ENCODE measurements at regions of chr2 and their contacts with region 1.

Region 1: DNA sequence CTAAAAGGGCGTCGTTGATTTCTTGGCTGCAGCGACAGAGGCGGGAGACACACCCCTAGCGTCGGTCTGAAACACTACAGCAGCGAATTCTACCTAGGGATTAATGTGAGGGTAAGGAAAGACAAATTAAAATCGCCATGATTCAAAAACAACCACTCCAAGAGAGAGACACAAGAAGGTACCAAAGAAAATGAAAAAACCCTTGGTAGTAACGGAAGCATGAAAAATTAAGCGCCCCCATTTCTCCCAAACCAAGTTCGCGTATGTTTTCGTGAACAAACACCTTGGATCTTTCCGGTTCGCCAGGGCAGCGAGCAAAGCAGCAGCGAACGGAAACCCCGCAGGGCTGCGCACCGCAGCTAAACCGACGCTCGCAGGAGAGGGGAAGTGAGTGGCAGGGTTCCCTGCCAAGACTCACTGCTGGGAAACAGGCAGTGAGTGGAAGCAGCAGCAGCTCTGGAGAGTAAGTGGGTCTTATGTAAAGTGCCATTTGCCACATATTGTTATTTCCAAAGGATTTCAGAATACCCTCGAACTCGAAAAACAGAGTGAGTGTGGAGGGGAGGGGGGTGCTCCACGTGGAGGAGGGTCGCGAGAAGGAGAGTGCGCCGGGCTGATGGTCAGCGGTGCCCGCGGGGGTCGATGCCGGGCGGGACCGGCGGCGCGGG is 1.0 kb downstream of the PPP3R1 start:
- DNase-seq: peak; percentile 75 to 81
- ATAC-seq: peak; percentile 70
- H3K4me3 ChIP-seq: peak overlapping the region; percentile 96 to 100
- H3K27ac ChIP-seq: peak overlapping the region; percentile 80 to 99
- H3K4me1 ChIP-seq: peaks cover 0 to 9% of the 10 kb centered on the region in 2 donors
- H3K27me3 ChIP-seq: peaks cover 0 to 2% of the 10 kb centered on the region in 2 donors

Region 2: GRCh38 chr2:68157402-68158133 is 93.8 kb before region 1 on chr2 and contains the start of gene PNO1:
- intact Hi-C with region 1: loop called (anchors 1 kb)
- DNase-seq: peak; percentile 97 to 98
- ATAC-seq: peak; percentile 100
- H3K4me3 ChIP-seq: peak within 1 kb of the TSS; percentile 76
- H3K27ac ChIP-seq: peak within 1 kb of the TSS in 1 of 2 donors; percentile 63
- H3K4me1 ChIP-seq: peaks cover 0 to 3% of the 10 kb centered on the region in 2 donors
- H3K27me3 ChIP-seq: no peaks in the 10 kb centered on the region
- total RNA-seq, gene PNO1: 10.5 to 12.2 TPM

Measured in aorta (tissue), 5 donors.